Dorsolateral prefrontal cortex (tissue), 120 donors: ENCODE measurements at regions of chr16 and their contacts with region 1.

Region 1: GRCh38 chr16:47204736-47205504 is 61.2 kb upstream of the NETO2 start:
- DNase-seq: peak in 2 of 10 donors; percentile 20 to 38
- H3K4me3 ChIP-seq: no peak overlapping the region
- H3K27ac ChIP-seq: peak overlapping the region in 1 of 59 donors; percentile 44
- H3K27me3 ChIP-seq: no peaks in the 10 kb centered on the region
- CTCF ChIP-seq: peak in 46 of 56 donors; percentile 11 to 76 (median 42)

Region 2: DNA sequence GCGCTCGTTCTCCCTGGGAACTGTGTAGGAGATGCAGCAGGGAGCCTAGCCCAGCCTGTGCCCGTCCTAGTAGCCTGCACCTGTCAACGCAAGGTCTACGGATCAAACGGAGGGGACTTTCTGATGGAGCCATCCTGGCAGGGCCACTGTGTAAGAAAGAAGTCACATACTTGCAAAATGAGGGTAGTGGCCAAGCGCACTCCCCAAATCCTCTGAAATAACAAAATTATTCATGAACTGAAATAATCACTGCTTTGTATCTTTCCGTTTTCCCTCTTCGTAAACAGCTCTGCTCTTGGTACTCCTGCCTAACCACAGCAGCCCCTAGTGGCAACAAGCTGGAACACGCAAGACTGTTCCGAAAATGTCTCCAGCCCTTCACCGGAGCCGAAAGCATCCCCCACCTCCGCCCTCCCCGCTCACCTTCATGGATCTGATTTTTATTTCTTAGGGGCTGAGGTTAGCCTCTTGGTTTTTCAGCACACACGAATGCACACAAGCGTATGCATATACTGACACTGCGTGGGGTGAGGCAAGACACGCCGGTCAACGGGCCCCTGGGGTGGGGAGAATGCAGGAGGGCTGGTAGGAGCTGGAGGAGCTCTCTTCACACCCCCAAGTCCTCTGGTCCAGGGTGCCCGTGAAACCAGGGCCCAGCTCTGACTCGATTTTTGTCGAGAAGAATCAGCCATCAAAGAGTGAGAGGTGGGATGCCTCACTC is 850.1 kb after region 1 on chr16:
- intact Hi-C with region 1: loop called in 1 of 2 experiments (anchors 10 kb)
- DNase-seq: peak; percentile 44 to 82 (median 73)
- H3K4me3 ChIP-seq: peak overlapping the region; percentile 12 to 72 (median 51)
- H3K27ac ChIP-seq: peak overlapping the region; percentile 41 to 96 (median 88)
- H3K27me3 ChIP-seq: no peaks in the 10 kb centered on the region
- CTCF ChIP-seq: peak; percentile 67 to 92 (median 86)